ENCODE measurements at regions of chr1 and their contacts with region 1.

Region 1: GRCh38 chr1:93846211-93846991 is 32.6 kb downstream of the DNTTIP2 start:
- DNase-seq: peak; percentile 79 to 80
- ATAC-seq: peak; percentile 57 to 65
- H3K4me3 ChIP-seq: peak overlapping the region; percentile 71 to 91 (median 88)
- H3K27ac ChIP-seq: peak overlapping the region; percentile 95 to 98 (median 98)
- H3K4me1 ChIP-seq: peaks cover 12 to 19% of the 10 kb centered on the region in 2 donors
- H3K27me3 ChIP-seq: no peaks in the 10 kb centered on the region
- CTCF ChIP-seq: peak; percentile 22 to 64 (median 33)
- POLR2A ChIP-seq: peak; percentile 66 to 67

Region 2: DNA sequence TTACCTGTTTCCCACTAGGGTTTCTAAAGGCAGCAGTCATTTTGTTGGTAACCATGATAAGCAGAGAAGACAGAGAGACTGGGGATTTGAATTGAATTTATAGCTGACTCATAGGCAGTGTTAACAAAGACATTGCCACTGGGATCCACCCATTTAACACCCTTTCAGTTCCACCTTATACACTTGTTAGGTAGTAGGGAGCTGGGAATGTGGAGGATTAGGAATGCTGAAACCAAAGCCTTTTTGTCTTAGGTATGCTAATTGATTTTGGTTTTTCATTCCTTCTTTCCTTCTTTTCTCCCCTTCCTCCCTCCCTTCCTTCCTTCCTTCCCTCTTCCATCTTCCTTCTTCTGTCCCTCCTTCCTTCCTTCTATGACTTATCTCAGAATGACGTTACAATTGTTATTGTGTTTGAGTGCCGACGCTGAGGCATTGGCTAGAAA is 1054.0 kb before region 1 on chr1:
- in situ Hi-C with region 1: no loop called
- intact Hi-C with region 1: no loop called
- DNase-seq: no peak
- ATAC-seq: no peak
- H3K4me3 ChIP-seq: no peak overlapping the region
- H3K27ac ChIP-seq: no peak overlapping the region
- H3K4me1 ChIP-seq: peaks cover 6 to 8% of the 10 kb centered on the region in 2 donors
- H3K27me3 ChIP-seq: no peaks in the 10 kb centered on the region
- CTCF ChIP-seq: no peak
- POLR2A ChIP-seq: no peak

Region 3: GRCh38 chr1:93345633-93346420 is 500.6 kb before region 1 on chr1 and contains the start of gene DR1:
- in situ Hi-C with region 1: no loop called
- intact Hi-C with region 1: loop called (anchors 2 kb)
- DNase-seq: peak; percentile 93 to 97
- ATAC-seq: peak; percentile 88 to 94
- H3K4me3 ChIP-seq: peak within 1 kb of the TSS; percentile 82 to 97 (median 94)
- H3K27ac ChIP-seq: peak within 1 kb of the TSS; percentile 95 to 98 (median 96)
- H3K4me1 ChIP-seq: peaks cover 24 to 39% of the 10 kb centered on the region in 2 donors
- H3K27me3 ChIP-seq: no peaks in the 10 kb centered on the region
- CTCF ChIP-seq: no peak
- POLR2A ChIP-seq: peak; percentile 80 to 83
- total RNA-seq, gene DR1: 26.8 to 59.1 (median 37.9) TPM

Region 4: GRCh38 chr1:93447516-93448291 is 398.7 kb before region 1 on chr1 and contains the start of gene FNBP1L:
- in situ Hi-C with region 1: loop called in 2 of 4 experiments (anchors 25 kb)
- intact Hi-C with region 1: loop called (anchors 1 kb)
- DNase-seq: peak; percentile 62 to 63
- ATAC-seq: peak; percentile 59
- H3K4me3 ChIP-seq: peak within 1 kb of the TSS; percentile 84 to 94 (median 90)
- H3K27ac ChIP-seq: peak within 1 kb of the TSS; percentile 85 to 98 (median 88)
- H3K4me1 ChIP-seq: peaks cover 14 to 15% of the 10 kb centered on the region in 2 donors
- H3K27me3 ChIP-seq: no peaks in the 10 kb centered on the region
- CTCF ChIP-seq: no peak
- POLR2A ChIP-seq: peak; percentile 82 to 83
- total RNA-seq, gene FNBP1L: 16.0 to 35.1 (median 17.4) TPM

Region 5: DNA sequence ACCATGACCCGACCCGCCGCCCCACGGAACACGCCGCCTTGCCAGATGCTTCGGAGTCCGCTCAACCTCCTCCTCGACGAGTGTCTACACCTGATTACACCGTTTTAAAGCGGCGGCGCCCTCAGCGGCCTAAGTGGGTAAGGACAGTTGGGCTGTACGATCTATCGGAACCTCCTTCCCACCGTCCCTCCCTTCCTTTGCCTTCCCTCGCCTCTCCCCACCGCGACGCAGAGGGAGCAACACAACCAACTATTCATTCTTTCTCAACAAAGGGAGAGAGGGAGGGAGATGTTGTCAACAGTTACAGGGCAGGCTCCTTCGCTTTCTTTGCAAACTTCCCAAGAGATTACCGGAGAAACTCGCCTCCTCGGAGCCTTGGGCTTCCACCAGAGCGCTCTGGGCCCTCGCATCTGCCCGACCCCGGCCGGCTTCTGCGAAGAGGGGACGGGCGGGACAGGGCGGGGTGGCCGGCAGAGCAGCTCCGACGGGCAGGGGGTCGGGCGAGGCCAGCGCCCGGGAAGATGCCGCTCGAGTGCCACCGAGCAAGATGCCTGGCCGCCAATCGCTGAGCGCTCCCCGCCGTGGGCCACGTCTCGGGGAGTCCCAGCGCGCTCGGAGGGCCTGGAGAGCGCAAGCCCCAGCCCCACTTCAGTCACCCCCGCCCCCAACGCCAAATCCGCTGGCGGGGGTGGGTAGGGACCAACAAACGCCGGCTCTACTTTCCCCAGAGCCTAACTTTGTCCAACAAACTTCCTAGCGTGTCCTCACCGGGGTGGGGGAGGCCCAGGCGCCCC is 165.4 kb before region 1 on chr1:
- in situ Hi-C with region 1: no loop called
- intact Hi-C with region 1: loop called (anchors 5 kb)
- DNase-seq: peak; percentile 57 to 63
- ATAC-seq: peak; percentile 83 to 85
- H3K4me3 ChIP-seq: peak overlapping the region; percentile 71 to 87 (median 82)
- H3K27ac ChIP-seq: peak overlapping the region; percentile 73 to 80 (median 77)
- H3K4me1 ChIP-seq: peaks cover 0 to 21% of the 10 kb centered on the region in 2 donors
- H3K27me3 ChIP-seq: no peaks in the 10 kb centered on the region
- CTCF ChIP-seq: peak; percentile 42 to 66 (median 63)
- POLR2A ChIP-seq: peak; percentile 9 to 29

Region 6: DNA sequence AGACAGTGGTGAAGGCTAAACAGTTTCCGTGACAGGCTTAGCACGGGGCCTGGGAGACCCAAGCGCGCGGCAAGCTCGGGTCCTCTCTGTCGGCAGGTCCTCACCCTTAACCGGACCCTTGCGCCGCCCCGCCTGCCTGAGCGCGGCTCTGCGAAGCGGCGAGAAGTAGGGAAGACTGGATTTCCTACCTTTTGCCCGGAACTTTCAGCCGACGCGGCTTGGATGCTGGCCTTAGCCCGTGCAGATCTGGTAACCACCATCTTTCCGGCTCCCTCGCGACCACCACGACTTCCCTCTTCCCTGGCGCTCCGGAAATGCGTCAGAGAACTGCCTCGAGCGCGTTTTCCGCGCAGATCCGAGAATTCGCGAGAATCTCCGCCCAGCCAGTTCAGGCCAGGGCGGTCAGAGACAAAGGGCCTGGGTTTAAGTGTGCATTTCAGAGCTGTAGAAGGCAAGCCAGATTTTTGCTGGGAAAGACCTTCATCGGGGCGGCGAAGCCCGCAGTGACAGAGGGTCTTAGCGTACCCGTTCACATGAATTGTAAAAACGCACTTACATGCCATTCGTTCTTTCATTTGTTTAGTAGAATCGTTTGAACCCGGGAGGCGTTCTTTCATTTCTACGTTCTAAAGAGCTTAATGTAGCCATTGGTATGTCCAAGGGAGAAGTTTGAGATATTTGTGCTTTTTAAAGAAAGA is 32.6 kb after region 1 on chr1 and contains the start of gene DNTTIP2:
- in situ Hi-C with region 1: no loop called
- intact Hi-C with region 1: loop called (anchors 2 kb)
- DNase-seq: peak; percentile 80 to 84
- ATAC-seq: peak; percentile 94 to 97
- H3K4me3 ChIP-seq: peak within 1 kb of the TSS; percentile 80 to 99 (median 87)
- H3K27ac ChIP-seq: peak within 1 kb of the TSS; percentile 91 to 98 (median 94)
- H3K4me1 ChIP-seq: peaks cover 30 to 35% of the 10 kb centered on the region in 2 donors
- H3K27me3 ChIP-seq: no peaks in the 10 kb centered on the region
- CTCF ChIP-seq: no peak
- POLR2A ChIP-seq: peak; percentile 84 to 89
- total RNA-seq, gene DNTTIP2: 50.4 to 75.3 (median 59.1) TPM

Region 7: GRCh38 chr1:93988634-93989350 is 142.4 kb after region 1 on chr1:
- in situ Hi-C with region 1: no loop called
- intact Hi-C with region 1: no loop called
- DNase-seq: no peak
- ATAC-seq: peak in 1 of 2 donors; percentile 56
- H3K4me3 ChIP-seq: no peak overlapping the region
- H3K27ac ChIP-seq: peak overlapping the region in 1 of 4 donors; percentile 47
- H3K4me1 ChIP-seq: no peaks in the 10 kb centered on the region
- H3K27me3 ChIP-seq: no peaks in the 10 kb centered on the region
- CTCF ChIP-seq: no peak
- POLR2A ChIP-seq: no peak

Region 8: GRCh38 chr1:94237291-94238226 is 391.2 kb after region 1 on chr1 and contains the start of gene ARHGAP29:
- in situ Hi-C with region 1: no loop called
- intact Hi-C with region 1: loop called (anchors 1 kb)
- DNase-seq: peak; percentile 60 to 79
- ATAC-seq: peak; percentile 85 to 86
- H3K4me3 ChIP-seq: peak within 1 kb of the TSS; percentile 78 to 86 (median 80)
- H3K27ac ChIP-seq: peak within 1 kb of the TSS; percentile 86 to 93 (median 92)
- H3K4me1 ChIP-seq: peaks cover 26 to 32% of the 10 kb centered on the region in 2 donors
- H3K27me3 ChIP-seq: no peaks in the 10 kb centered on the region
- CTCF ChIP-seq: peak in 1 of 5 experiments; percentile 19
- POLR2A ChIP-seq: peak; percentile 91 to 93
- total RNA-seq, gene ARHGAP29: 10.0 to 13.5 (median 11.6) TPM

Measured in gastrocnemius medialis (tissue), 4 donors.